Activated B cell treated with CpG ODN at 0.5 μM for 24 hours (primary cell): ENCODE measurements at regions of chr3 and their contacts with region 1.

Region 1: DNA sequence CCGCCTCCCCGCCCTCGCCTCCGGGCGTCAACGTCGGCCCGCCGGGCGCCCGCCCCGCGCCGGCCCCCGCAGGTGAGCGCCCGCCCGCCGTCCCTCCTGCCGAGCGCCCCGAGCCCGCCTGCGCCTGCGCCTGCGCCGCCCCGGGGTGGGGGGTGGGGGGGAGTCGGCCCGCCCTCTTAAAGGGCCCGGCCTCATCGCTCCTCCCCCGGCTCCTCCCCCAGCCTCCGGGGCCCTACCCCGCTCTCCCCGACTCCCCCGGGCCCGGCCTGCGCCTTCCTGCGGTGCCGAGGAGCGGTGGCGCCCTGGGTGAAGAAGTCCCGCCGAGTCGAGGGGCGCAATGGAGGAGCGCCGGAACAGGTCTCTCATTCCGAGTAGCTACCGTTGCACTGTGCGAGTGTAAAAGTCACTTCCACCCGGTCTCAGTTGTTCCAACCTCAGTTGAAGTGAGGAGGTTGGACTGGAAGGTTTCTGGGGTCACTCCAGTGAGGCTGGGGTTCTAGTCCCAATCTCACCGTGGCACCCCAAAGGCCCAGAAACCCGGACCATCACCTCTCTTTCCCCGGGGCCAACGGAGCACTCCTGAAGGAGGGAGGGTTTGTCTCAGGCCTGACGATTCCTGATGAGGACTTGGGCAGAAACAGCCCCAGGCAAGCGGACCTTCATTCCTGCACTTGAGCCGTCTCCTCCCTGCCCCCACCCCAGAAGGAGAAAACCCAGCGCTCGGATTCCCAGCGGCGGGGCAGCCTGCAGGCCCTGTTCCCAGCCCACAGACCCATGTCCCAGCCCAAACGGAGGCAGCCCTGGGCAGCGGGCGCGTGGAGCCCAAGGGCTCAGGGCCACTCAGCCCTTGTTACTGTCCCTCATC is 1.5 kb upstream of the TNK2 start:
- DNase-seq: peak; percentile 88
- ATAC-seq: peak; percentile 65
- H3K4me3 Mint-ChIP-seq: peak overlapping the region; percentile 78
- H3K27ac Mint-ChIP-seq: peak overlapping the region; percentile 78
- H3K4me1 Mint-ChIP-seq: peaks cover 44% of the 10 kb centered on the region
- H3K27me3 Mint-ChIP-seq: no peaks in the 10 kb centered on the region
- CTCF ChIP-seq: no peak

Region 2: GRCh38 chr3:194671900-194672808 is 1237.7 kb before region 1 on chr3 and contains the start of gene LSG1:
- CTCF ChIA-PET with region 1: no interaction called
- POLR2A ChIA-PET with region 1: interaction called, 4 read pairs
- intact Hi-C with region 1: loop called (anchors 2 kb)
- DNase-seq: peak; percentile 80
- ATAC-seq: peak; percentile 94
- H3K4me3 Mint-ChIP-seq: peak within 1 kb of the TSS; percentile 99
- H3K27ac Mint-ChIP-seq: peak within 1 kb of the TSS; percentile 99
- H3K4me1 Mint-ChIP-seq: peaks cover 22% of the 10 kb centered on the region
- H3K27me3 Mint-ChIP-seq: peaks cover 6% of the 10 kb centered on the region
- CTCF ChIP-seq: no peak
- total RNA-seq, gene LSG1: 55.1 and 55.4 TPM in 2 replicates

Region 3: GRCh38 chr3:195748661-195749060 is 161.2 kb before region 1 on chr3:
- CTCF ChIA-PET with region 1: no interaction called
- POLR2A ChIA-PET with region 1: no interaction called
- intact Hi-C with region 1: loop called (anchors 5 kb)
- DNase-seq: no peak
- ATAC-seq: no peak
- H3K4me3 Mint-ChIP-seq: no peak overlapping the region
- H3K27ac Mint-ChIP-seq: no peak overlapping the region
- H3K4me1 Mint-ChIP-seq: peaks cover 13% of the 10 kb centered on the region
- H3K27me3 Mint-ChIP-seq: peaks cover 16% of the 10 kb centered on the region
- CTCF ChIP-seq: no peak

Region 4: DNA sequence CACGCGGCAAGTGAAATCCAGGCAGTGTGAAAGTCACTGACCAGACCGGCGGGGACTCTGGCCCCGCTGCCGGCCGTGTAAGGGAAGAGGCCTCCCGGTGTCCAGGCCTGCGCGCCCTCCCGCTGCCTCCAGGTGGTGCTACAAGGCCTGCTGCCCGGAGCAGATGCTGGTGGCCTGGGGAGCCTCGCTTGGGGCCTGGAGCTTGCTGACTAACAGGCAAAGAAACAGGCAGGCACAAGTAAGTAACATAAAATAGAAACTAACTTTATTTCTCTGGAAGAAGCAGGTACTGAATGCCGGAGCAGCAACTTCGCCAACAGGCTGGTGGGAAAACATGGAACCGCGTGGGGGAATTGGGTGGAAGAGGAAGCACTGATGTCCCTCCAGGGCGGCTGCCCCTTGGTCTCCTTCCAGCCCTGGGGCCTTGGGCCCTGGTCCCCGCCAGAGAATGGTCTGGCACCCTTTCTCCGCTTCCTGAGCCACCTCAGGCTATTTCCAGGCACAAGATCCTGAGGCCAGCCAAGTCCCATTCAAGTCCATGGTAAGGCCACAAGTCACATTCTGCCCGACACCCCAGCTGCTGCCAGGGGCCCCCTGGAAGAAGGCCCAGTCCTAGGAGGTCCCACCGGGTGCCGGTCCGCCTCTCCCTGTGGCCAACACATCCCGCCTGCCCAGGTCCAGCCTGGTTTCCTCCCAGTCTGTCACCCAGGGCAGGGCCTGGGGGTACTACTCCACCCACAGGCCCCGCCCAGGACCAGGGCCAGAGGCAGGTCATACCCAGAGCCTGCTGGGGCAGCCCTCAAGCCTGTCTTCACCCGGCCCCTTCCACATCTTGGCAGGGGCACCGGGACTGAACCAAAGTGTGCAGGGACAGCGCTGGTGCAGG is 46.5 kb before region 1 on chr3:
- CTCF ChIA-PET with region 1: interaction called, 70 read pairs
- POLR2A ChIA-PET with region 1: interaction called, 26 read pairs
- intact Hi-C with region 1: loop called (anchors 1 kb)
- DNase-seq: peak; percentile 67
- ATAC-seq: peak; percentile 94
- H3K4me3 Mint-ChIP-seq: no peak overlapping the region
- H3K27ac Mint-ChIP-seq: peak overlapping the region; percentile 66
- H3K4me1 Mint-ChIP-seq: peaks cover 11% of the 10 kb centered on the region
- H3K27me3 Mint-ChIP-seq: no peaks in the 10 kb centered on the region
- CTCF ChIP-seq: peak; percentile 43

Region 5: DNA sequence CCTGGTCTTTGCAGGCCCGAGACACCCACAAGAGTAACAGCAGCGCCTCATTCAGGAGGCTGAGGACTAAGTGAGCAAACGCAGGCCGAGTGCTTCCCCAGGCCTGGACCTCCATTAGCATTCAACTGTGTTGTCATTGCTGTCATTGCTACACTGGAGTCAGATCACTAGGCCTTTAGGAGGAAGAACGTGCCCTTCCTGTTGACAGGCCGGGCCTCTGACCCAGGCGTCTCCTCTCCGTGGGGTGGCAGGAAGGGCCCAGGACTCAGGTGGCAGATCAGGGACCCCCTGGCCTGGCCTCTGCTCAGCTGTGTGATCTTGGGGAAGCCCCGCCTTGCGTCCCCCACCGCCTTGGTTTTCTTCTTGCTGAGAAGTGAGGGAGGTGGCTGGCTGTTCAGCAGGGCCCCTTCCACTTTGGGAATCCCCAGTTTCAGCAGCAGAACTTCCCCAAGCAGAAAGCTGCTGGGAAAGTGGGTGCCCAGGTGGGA is 282.2 kb after region 1 on chr3:
- CTCF ChIA-PET with region 1: no interaction called
- POLR2A ChIA-PET with region 1: no interaction called
- intact Hi-C with region 1: loop called (anchors 10 kb)
- DNase-seq: peak; percentile 68
- ATAC-seq: peak; percentile 73
- H3K4me3 Mint-ChIP-seq: peak overlapping the region; percentile 70
- H3K27ac Mint-ChIP-seq: peak overlapping the region; percentile 98
- H3K4me1 Mint-ChIP-seq: peaks cover 62% of the 10 kb centered on the region
- H3K27me3 Mint-ChIP-seq: no peaks in the 10 kb centered on the region
- CTCF ChIP-seq: no peak

Region 6: DNA sequence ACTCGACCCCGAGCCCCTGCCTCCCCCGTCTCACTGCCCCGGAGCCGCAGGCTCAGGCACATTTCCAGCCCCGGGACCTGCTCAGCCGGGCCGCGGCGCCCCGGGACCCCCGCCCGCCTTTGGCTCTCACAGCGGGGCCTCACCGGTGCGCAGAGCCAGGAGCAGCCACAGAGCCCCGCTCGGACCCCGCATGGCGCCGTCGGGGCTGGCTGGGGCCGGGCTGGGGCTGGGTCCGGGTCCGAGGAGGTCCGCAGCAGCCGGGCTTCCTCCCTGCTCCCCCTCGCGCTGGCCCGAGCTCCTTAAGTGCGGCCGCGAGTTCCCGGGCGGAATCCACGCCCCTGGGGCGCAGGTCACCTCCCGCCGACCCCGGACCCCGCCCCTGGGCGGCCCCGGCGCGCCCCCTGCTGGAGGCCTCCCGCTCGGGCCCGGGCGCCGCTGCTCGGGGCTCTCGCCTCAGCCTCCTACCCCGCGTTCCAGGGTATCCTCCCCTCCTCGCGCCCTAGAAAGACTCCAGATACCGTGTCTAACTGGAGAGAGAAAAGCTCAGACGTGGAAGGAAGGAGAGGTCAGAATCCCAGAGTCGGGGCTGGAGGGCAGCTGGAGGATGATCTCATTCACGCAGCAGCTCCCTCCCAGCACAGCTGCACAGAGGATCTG is 1119.8 kb after region 1 on chr3 and contains the start of gene MELTF:
- CTCF ChIA-PET with region 1: no interaction called
- POLR2A ChIA-PET with region 1: no interaction called
- intact Hi-C with region 1: loop called (anchors 10 kb)
- DNase-seq: peak; percentile 83
- ATAC-seq: peak; percentile 73
- H3K4me3 Mint-ChIP-seq: peak within 1 kb of the TSS; percentile 82
- H3K27ac Mint-ChIP-seq: peak within 1 kb of the TSS; percentile 56
- H3K4me1 Mint-ChIP-seq: peaks cover 23% of the 10 kb centered on the region
- H3K27me3 Mint-ChIP-seq: peaks cover 24% of the 10 kb centered on the region
- CTCF ChIP-seq: peak; percentile 93
- total RNA-seq, gene MELTF: 50.0 and 61.5 TPM in 2 replicates